ENCODE measurements at regions of chr19 and their contacts with region 1.

Region 1: DNA sequence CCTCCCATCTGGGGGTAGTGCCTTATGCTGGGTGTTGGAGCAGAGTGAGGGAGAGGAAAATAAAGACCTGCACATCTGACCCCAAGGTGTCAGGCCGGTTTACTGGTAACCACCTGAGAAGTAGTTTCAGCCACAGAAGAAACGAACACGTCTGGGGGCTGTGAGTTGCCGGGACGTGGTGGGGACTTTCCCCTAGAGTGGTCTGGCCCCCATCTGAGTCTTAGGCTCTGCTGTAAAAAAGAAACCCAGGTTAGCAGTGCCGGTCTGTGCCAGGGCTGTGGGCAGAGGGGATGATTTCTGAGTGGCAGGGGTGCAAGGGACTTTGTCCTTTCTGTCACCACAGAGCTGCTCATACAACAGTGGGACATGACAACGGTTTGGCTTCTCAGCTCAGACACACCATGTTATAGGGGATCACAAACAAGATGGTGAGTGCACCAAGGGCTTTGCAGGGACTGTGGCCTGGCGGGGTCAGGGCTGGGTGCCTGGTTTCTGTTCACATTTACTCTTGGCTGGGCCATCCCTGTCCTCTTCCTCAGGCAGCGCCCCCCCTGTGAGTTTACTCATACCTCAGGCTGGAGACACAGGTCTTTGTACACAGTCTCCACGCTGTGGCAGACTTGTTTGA is 9.0 kb downstream of the GCDH start:
- DNase-seq: no peak
- H3K4me3 Mint-ChIP-seq: no peak overlapping the region
- H3K27ac Mint-ChIP-seq: no peak overlapping the region
- H3K4me1 Mint-ChIP-seq: no peaks in the 10 kb centered on the region
- H3K27me3 Mint-ChIP-seq: no peaks in the 10 kb centered on the region
- CTCF ChIP-seq: no peak

Region 2: DNA sequence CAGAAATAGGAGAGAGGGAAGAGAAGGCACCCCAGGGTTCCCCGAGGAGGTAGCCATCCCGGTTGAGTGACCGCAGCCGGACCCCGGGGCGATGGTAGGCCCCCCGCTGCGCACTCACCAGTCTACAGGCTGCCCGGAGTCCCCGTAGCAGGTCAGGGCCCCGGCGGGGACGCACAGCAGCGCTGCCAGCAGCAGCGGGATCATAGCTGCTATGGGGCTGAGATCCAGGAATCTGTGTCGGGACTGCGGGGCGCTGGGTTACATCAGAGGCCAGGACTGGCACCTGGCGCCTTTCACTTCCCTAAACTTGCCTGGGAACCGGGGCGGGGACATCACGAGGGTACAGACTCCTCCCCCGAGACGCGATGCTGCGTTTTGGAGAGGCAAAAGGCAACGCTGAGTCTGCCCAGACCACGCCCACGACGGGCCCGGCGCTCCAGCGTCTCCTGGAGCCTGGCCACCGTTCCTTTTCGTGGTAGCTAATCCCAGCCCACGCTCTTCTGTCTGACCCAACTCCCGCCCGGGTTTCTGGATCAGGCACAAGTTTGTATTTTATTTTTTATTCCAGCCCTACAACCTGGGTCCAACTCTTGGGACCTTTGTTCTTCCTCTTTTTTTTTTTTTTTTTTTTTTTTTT is 18.7 kb before region 1 on chr19 and contains the start of gene DNASE2:
- CTCF ChIA-PET with region 1: interaction called, 3 read pairs
- POLR2A ChIA-PET with region 1: interaction called, 13 read pairs
- intact Hi-C with region 1: no loop called
- DNase-seq: peak; percentile 99
- H3K4me3 Mint-ChIP-seq: peak within 1 kb of the TSS; percentile 84
- H3K27ac Mint-ChIP-seq: peak within 1 kb of the TSS; percentile 90
- H3K4me1 Mint-ChIP-seq: no peaks in the 10 kb centered on the region
- H3K27me3 Mint-ChIP-seq: no peaks in the 10 kb centered on the region
- CTCF ChIP-seq: no peak
- total RNA-seq, gene DNASE2: 26.7 and 28.7 TPM in 2 replicates

Measured in MCF 10A (cell line).